GM10248 (cell line): ENCODE measurements at regions of chr22 and their contacts with region 1.

Region 1: GRCh38 chr22:19109198-19110067 is 12.8 kb downstream of the DGCR2 start:
- DNase-seq: peak; percentile 68
- CTCF ChIP-seq: no peak

Region 2: GRCh38 chr22:18994701-18995326 is 114.6 kb before region 1 on chr22:
- CTCF ChIA-PET with region 1: no interaction called
- POLR2A ChIA-PET with region 1: no interaction called
- DNase-seq: no peak
- CTCF ChIP-seq: no peak

Region 3: GRCh38 chr22:19122143-19122751 is 12.8 kb after region 1 on chr22 and contains the start of gene DGCR2:
- CTCF ChIA-PET with region 1: interaction called, 11 read pairs
- POLR2A ChIA-PET with region 1: no interaction called
- DNase-seq: peak; percentile 100
- CTCF ChIP-seq: no peak

Region 4: GRCh38 chr22:19143967-19144400 is 34.6 kb after region 1 on chr22:
- CTCF ChIA-PET with region 1: interaction called, 12 read pairs
- POLR2A ChIA-PET with region 1: no interaction called
- DNase-seq: no peak
- CTCF ChIP-seq: no peak

Region 5: DNA sequence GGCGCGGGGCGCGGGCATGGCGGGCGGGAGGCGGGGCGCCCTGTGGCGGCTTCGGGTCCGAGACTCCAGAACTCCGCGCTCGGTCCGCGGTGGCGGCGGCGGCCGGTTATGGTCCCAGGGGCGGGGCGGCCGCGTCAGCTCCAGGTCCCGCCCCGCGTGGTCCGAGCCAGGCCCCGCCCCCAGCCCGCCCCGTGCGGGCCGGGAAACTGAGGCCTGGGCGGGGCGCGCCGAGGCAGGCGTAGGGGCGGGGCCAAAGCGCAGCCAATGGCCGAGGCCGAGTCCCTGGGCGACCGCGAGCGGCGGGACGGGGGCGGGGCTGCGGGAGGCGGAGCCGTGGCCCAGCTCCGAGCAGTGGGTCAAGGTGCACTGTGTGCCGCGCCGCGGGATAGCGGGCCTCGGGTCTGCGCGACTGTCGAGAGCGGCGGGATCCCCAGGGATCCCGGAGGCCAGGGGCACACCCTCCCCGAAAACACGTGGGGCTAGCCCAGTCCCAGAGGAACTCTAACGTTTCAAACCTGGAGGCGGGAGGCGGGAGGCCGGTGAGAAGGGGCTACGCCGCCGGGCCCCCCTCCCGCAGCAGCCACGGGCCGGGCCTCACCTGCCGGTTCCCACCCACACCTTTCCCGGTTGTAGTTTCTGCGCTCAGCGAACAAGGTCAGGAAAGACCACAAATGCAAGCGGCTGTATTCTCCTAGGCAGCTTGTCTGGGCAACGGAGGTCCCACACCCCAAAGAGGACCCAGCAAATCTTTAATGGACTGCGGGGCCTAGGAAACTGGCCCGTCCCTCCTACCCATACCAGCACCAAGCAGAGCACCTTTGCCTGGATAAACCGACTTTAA is 69.4 kb after region 1 on chr22 and contains the start of gene SLC25A1:
- CTCF ChIA-PET with region 1: no interaction called
- POLR2A ChIA-PET with region 1: no interaction called
- DNase-seq: peak; percentile 97
- CTCF ChIP-seq: no peak

Region 6: GRCh38 chr22:19271856-19272535 is 162.6 kb after region 1 on chr22:
- CTCF ChIA-PET with region 1: no interaction called
- POLR2A ChIA-PET with region 1: no interaction called
- DNase-seq: no peak
- CTCF ChIP-seq: no peak